Mammary epithelial cell (primary cell): ENCODE measurements at regions of chr12 and their contacts with region 1.

Region 1: DNA sequence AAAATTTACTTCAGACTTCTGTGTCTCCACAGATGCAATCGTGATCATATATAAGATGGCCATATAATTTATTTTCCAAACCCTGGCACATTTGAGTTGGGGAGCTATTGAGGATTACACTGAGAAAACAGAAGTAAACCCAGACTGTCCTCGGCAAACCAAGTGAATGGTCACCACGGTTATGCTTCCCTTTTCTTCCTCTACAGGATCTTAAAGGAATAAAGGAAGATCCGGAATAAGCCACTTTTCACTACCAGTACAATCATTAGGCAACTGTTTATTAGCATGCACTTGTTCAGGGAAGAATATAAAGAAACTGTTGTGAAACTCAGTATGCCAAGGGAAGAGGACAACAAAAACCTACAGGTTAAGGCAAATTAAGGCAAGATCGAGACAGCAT is 27.6 kb downstream of the SBNO1 start:
- DNase-seq: no peak
- H3K4me3 ChIP-seq: no peak overlapping the region
- H3K27ac ChIP-seq: no peak overlapping the region
- H3K4me1 ChIP-seq: no peaks in the 10 kb centered on the region
- H3K27me3 ChIP-seq: no peaks in the 10 kb centered on the region
- CTCF ChIP-seq: no peak

Region 2: DNA sequence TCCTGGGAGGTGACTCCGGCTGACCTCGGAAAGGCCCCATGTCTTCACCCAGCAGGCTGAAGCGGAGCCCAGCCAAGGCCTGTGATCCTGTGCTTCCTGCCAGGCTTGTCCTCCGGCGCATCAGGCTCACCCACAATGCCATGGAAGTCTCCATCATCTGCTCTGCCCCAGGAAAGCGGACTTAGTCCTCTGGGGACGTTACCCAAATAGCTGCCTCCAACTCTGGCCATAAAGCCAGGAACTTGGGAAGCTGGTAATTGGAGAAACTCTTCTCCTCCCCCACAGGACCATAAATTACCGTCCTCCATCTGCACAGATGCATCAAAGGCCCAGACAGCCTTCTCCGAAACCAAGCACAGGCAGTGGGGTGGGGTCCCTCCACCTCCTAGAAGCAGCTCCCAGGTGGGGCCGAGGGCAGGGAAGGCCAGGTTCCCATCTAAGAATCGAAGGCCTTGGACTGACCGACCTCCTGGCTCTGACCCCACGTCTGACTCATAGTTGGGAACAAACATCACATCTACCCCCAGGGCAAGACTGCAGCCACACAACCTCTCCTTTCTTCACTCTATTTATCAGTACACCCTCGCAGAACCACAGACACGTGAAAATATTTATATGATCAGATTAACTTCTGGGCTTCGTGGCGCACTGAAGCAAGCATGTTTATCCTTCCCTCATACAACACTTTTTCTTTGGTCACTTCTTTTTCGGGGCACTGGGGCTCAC is 242.6 kb before region 1 on chr12:
- CTCF ChIA-PET with region 1: no interaction called
- dilution Hi-C with region 1: no loop called
- in situ Hi-C with region 1: no loop called
- intact Hi-C with region 1: no loop called
- DNase-seq: peak; percentile 78
- H3K4me3 ChIP-seq: no peak overlapping the region
- H3K27ac ChIP-seq: no peak overlapping the region
- H3K4me1 ChIP-seq: peaks cover 46% of the 10 kb centered on the region
- H3K27me3 ChIP-seq: no peaks in the 10 kb centered on the region
- CTCF ChIP-seq: no peak

Region 3: DNA sequence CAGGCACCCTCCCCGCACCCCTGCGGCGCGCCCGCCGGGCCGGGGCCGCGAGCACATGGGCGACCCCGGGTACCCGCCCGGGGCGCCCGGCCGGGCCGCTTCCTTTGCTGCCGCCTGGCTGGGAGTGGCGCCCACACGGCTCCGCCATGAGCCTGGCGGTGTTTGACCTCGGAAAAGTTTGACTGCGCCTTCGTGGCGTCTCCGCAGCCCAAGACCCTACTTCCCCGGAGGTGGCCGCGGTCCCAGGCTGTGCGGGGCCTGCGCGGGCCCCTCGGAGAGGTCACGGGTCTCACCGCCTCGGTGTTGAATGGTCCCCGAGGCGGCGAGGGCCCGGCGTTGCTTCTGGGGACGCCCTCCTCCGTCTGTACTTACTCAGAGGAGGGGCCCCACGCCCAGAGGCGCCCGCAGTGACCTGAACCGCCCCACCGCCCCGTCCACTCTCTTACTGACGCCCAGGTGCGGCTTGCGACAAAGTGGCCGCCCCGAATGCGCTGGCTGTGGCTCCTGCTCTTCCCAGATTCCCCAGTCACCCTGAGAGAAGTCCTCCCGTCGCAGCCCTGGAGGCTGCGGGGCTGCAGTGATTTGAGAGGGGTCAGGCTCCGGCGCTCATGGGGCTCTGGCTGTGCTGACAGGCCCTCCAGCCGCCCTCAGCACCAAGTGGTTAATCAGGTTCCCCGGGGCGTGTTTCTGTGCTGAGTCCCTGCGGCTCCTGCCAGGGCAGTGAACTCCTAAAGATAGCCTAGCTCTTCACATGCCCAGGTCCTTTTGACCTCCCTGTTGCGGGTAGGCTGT is 52.7 kb after region 1 on chr12:
- CTCF ChIA-PET with region 1: no interaction called
- dilution Hi-C with region 1: no loop called
- in situ Hi-C with region 1: no loop called
- intact Hi-C with region 1: no loop called
- DNase-seq: peak; percentile 50
- H3K4me3 ChIP-seq: peak overlapping the region; percentile 62 to 80 (median 65)
- H3K27ac ChIP-seq: peak overlapping the region; percentile 24
- H3K4me1 ChIP-seq: peaks cover 30% of the 10 kb centered on the region
- H3K27me3 ChIP-seq: no peaks in the 10 kb centered on the region
- CTCF ChIP-seq: no peak

Region 4: DNA sequence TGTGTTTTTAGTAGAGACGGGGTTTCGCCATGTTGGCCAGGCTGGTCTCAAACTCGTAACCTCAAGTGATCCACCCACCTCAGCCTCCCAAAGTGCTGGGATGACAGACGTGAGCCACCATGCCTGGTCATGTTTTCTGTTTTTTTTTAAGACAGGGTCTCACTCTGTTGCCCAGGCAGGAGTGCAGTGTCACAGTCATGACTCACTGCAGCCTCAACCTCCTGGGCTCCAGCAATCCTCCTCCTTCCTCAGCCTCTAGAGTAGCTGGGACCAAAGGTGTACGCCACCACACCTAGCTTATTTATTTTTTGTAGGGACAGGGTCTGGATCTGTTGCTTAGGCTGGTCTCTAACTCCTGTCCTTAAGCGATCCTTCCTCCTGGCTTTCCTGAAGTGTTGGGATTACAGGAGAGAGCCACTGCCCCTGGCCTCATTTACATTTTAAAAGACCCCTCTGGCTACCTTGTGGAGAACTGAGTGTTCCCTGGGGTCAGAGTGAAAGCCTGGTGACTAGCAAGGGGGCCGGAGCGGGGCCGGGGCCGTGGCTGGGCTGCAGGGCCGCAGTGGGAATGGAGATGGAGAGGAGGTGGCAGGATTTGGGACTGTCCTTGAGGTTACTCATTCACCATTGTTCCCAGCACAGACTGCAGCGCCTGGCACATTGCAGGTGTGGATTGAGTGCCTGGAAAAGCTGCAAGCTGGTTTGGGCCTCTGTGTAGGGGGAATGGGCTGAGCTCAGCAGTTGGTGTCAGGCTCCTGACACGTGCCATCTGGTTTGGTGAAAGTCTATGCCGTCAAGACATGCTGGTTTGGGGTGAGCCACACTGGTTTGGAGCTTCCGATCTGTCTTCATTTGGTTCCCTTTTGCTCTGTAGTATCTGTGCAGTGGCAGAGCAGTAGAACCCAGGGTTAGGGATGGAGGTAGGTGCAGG is 64.9 kb after region 1 on chr12:
- CTCF ChIA-PET with region 1: no interaction called
- dilution Hi-C with region 1: loop called (anchors 5 kb)
- in situ Hi-C with region 1: no loop called
- intact Hi-C with region 1: no loop called
- DNase-seq: no peak
- H3K4me3 ChIP-seq: no peak overlapping the region
- H3K27ac ChIP-seq: no peak overlapping the region
- H3K4me1 ChIP-seq: no peaks in the 10 kb centered on the region
- H3K27me3 ChIP-seq: no peaks in the 10 kb centered on the region
- CTCF ChIP-seq: no peak